ENCODE measurements at regions of chr5 and their contacts with region 1.

Region 1: GRCh38 chr5:143372187-143372829 is 31.2 kb downstream of the NR3C1 start:
- DNase-seq: no peak
- ATAC-seq: no peak
- H3K4me3 ChIP-seq: no peak overlapping the region
- H3K4me3 Mint-ChIP-seq: peak overlapping the region in 1 of 10 donors; percentile 41
- H3K27ac ChIP-seq: no peak overlapping the region
- H3K27ac Mint-ChIP-seq: peak overlapping the region in 3 of 9 donors; percentile 22 to 38 (median 31)
- H3K4me1 ChIP-seq: peaks cover 7 to 10% of the 10 kb centered on the region in 2 donors
- H3K4me1 Mint-ChIP-seq: peaks cover 41 to 98% (median 94%) of the 10 kb centered on the region in 7 donors
- H3K27me3 ChIP-seq: no peaks in the 10 kb centered on the region
- H3K27me3 Mint-ChIP-seq: no peaks in the 10 kb centered on the region

Region 2: GRCh38 chr5:143386725-143387124 is 14.4 kb after region 1 on chr5:
- CTCF ChIA-PET with region 1: no interaction called
- POLR2A ChIA-PET with region 1: no interaction called
- intact Hi-C with region 1: loop called in 1 of 2 experiments (anchors 2 kb)
- DNase-seq: no peak
- ATAC-seq: no peak
- H3K4me3 ChIP-seq: no peak overlapping the region
- H3K4me3 Mint-ChIP-seq: peak overlapping the region in 4 of 10 donors; percentile 5 to 23 (median 18)
- H3K27ac ChIP-seq: no peak overlapping the region
- H3K27ac Mint-ChIP-seq: peak overlapping the region in 3 of 9 donors; percentile 12 to 70 (median 37)
- H3K4me1 ChIP-seq: peaks cover 13 to 17% of the 10 kb centered on the region in 2 donors
- H3K4me1 Mint-ChIP-seq: peaks cover 35 to 97% (median 83%) of the 10 kb centered on the region in 7 donors
- H3K27me3 ChIP-seq: no peaks in the 10 kb centered on the region
- H3K27me3 Mint-ChIP-seq: no peaks in the 10 kb centered on the region